Activated CD4-positive, alpha-beta memory T cell treated with anti-CD3 and anti-CD28 coated beads, Interleukin-2, amount 10 ng/mL, durations not matched to agents 7 days and 5 days (primary cell): ENCODE measurements at regions of chr19 and their contacts with region 1.

Region 1: GRCh38 chr19:41859618-41860418 is at the start of gene RPS19:
- DNase-seq: peak; percentile 98
- H3K4me3 Mint-ChIP-seq: peak within 1 kb of the TSS; percentile 82
- H3K27ac Mint-ChIP-seq: peak within 1 kb of the TSS; percentile 94
- H3K4me1 Mint-ChIP-seq: peaks cover 45% of the 10 kb centered on the region
- H3K27me3 Mint-ChIP-seq: peaks cover 2% of the 10 kb centered on the region
- total RNA-seq, gene RPS19: 2,625 to 2,652 TPM

Region 2: GRCh38 chr19:41849067-41849466 is 10.8 kb before region 1 on chr19:
- CTCF ChIA-PET with region 1: interaction called, 12 read pairs
- POLR2A ChIA-PET with region 1: interaction called, 4 read pairs
- DNase-seq: no peak
- H3K4me3 Mint-ChIP-seq: no peak overlapping the region
- H3K27ac Mint-ChIP-seq: no peak overlapping the region
- H3K4me1 Mint-ChIP-seq: no peaks in the 10 kb centered on the region
- H3K27me3 Mint-ChIP-seq: peaks cover 31% of the 10 kb centered on the region

Region 3: GRCh38 chr19:41883821-41884733 is 24.3 kb after region 1 on chr19:
- CTCF ChIA-PET with region 1: interaction called, 23 read pairs
- POLR2A ChIA-PET with region 1: interaction called, 384 read pairs
- DNase-seq: peak; percentile 94
- H3K4me3 Mint-ChIP-seq: peak overlapping the region; percentile 85
- H3K27ac Mint-ChIP-seq: peak overlapping the region; percentile 93
- H3K4me1 Mint-ChIP-seq: peaks cover 55% of the 10 kb centered on the region
- H3K27me3 Mint-ChIP-seq: no peaks in the 10 kb centered on the region

Region 4: GRCh38 chr19:41904118-41904870 is 44.5 kb after region 1 on chr19:
- CTCF ChIA-PET with region 1: no interaction called
- POLR2A ChIA-PET with region 1: interaction called, 10 read pairs
- DNase-seq: no peak
- H3K4me3 Mint-ChIP-seq: no peak overlapping the region
- H3K27ac Mint-ChIP-seq: no peak overlapping the region
- H3K4me1 Mint-ChIP-seq: peaks cover 17% of the 10 kb centered on the region
- H3K27me3 Mint-ChIP-seq: no peaks in the 10 kb centered on the region

Region 5: GRCh38 chr19:41945135-41945766 is 85.4 kb after region 1 on chr19:
- CTCF ChIA-PET with region 1: interaction called, 23 read pairs
- POLR2A ChIA-PET with region 1: interaction called, 33 read pairs
- DNase-seq: peak; percentile 87
- H3K4me3 Mint-ChIP-seq: peak overlapping the region; percentile 4
- H3K27ac Mint-ChIP-seq: peak overlapping the region; percentile 79
- H3K4me1 Mint-ChIP-seq: peaks cover 44% of the 10 kb centered on the region
- H3K27me3 Mint-ChIP-seq: peaks cover 18% of the 10 kb centered on the region

Region 6: GRCh38 chr19:41959056-41960053 is 99.5 kb after region 1 on chr19 and contains the start of gene RABAC1:
- CTCF ChIA-PET with region 1: interaction called, 32 read pairs
- POLR2A ChIA-PET with region 1: interaction called, 29 read pairs
- DNase-seq: peak; percentile 92
- H3K4me3 Mint-ChIP-seq: peak within 1 kb of the TSS; percentile 92
- H3K27ac Mint-ChIP-seq: peak within 1 kb of the TSS; percentile 79
- H3K4me1 Mint-ChIP-seq: peaks cover 21% of the 10 kb centered on the region
- H3K27me3 Mint-ChIP-seq: no peaks in the 10 kb centered on the region
- total RNA-seq, gene RABAC1: 97.2 to 105 TPM

Region 7: DNA sequence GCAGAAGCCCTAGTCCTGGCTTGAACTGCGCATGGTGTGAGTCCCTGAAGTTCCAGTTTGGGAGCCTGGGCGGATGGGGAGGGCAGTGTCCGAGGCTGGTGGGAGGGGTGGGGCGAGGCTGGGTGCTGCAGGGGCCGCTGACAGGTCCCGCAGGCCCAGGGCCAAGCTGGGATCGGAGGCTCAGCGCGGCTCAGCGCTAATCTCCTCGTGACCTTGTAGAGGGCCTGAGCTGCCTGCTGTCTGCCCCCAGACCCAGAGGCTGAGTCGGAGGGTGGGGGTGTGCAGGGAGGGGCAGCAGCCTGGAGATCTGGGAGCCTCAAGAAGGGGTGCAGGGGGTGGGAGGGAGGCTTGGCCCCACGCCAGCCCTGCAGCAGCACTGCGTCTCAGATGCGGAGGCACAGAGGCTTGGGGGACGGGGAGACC is 131.2 kb after region 1 on chr19:
- CTCF ChIA-PET with region 1: no interaction called
- POLR2A ChIA-PET with region 1: no interaction called
- DNase-seq: no peak
- H3K4me3 Mint-ChIP-seq: no peak overlapping the region
- H3K27ac Mint-ChIP-seq: no peak overlapping the region
- H3K4me1 Mint-ChIP-seq: peaks cover 17% of the 10 kb centered on the region
- H3K27me3 Mint-ChIP-seq: peaks cover 23% of the 10 kb centered on the region